MCF 10A (cell line): ENCODE measurements at regions of chr1 and their contacts with region 1.

Region 1: DNA sequence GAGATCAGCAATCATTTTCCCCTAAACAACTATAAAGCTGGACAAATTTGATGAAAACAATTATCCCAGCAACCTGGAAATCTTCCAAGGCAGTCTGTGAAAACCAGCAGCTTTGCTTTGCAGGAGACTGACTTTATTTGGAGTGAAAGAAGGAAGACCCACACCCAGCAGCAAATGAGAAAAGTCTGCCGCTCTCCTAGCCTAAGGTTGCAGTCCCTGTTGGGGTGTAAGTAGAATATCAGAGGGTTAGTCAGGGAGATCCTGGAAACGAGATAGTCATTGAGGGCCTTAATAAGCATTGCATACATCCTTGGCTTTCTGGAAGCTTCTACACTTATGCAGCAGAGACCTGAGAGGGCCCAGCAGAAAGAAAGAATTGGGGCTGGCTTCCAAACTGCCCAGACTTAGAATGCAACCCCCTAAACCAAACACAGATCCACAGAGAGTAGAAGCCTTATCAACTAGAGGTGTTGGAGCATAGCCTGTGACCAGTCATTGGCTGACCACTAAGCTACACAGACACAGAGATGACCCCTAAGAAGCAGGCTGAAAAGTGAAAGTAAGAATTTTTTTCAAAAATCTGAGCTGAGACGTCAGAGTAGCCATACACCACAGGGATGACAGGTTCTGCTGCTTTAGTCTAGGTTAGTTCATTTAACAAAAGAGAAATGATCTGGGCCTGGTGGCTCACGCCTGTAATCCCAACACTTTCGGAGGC is 98.3 kb downstream of the LYPLAL1 start:
- DNase-seq: no peak
- H3K4me3 Mint-ChIP-seq: no peak overlapping the region
- H3K27ac Mint-ChIP-seq: no peak overlapping the region
- H3K4me1 Mint-ChIP-seq: no peaks in the 10 kb centered on the region
- H3K27me3 Mint-ChIP-seq: no peaks in the 10 kb centered on the region
- CTCF ChIP-seq: no peak

Region 2: DNA sequence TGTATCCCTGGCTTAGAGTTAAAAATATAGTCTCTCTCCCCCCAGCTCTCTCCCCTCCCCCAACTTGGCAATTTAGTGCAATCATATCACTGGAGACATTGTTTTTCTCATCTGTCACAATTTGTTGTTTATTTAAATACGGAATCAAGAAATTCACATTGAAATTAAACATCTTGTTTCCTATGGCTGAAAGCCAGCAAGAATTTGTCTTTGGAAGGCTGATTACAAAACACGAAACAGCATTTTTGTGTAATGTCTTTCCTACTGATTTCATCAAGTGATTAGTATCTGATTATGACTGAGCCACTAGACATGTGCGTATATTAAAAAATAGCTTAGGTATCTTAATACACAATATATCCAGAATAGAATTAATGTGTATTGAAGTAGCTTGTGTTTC is 21.4 kb after region 1 on chr1:
- CTCF ChIA-PET with region 1: interaction called, 11 read pairs
- POLR2A ChIA-PET with region 1: no interaction called
- intact Hi-C with region 1: no loop called
- DNase-seq: peak; percentile 44
- H3K4me3 Mint-ChIP-seq: no peak overlapping the region
- H3K27ac Mint-ChIP-seq: no peak overlapping the region
- H3K4me1 Mint-ChIP-seq: no peaks in the 10 kb centered on the region
- H3K27me3 Mint-ChIP-seq: peaks cover 84% of the 10 kb centered on the region
- CTCF ChIP-seq: no peak

Region 3: GRCh38 chr1:219329578-219329977 is 57.6 kb after region 1 on chr1:
- CTCF ChIA-PET with region 1: no interaction called
- POLR2A ChIA-PET with region 1: no interaction called
- intact Hi-C with region 1: no loop called
- DNase-seq: no peak
- H3K4me3 Mint-ChIP-seq: no peak overlapping the region
- H3K27ac Mint-ChIP-seq: no peak overlapping the region
- H3K4me1 Mint-ChIP-seq: peaks cover 12% of the 10 kb centered on the region
- H3K27me3 Mint-ChIP-seq: peaks cover 100% of the 10 kb centered on the region
- CTCF ChIP-seq: no peak

Region 4: GRCh38 chr1:219498666-219499065 is 226.7 kb after region 1 on chr1:
- CTCF ChIA-PET with region 1: no interaction called
- POLR2A ChIA-PET with region 1: no interaction called
- intact Hi-C with region 1: no loop called
- DNase-seq: peak; percentile 96
- H3K4me3 Mint-ChIP-seq: no peak overlapping the region
- H3K27ac Mint-ChIP-seq: no peak overlapping the region
- H3K4me1 Mint-ChIP-seq: no peaks in the 10 kb centered on the region
- H3K27me3 Mint-ChIP-seq: peaks cover 73% of the 10 kb centered on the region
- CTCF ChIP-seq: no peak